Endothelial cell of umbilical vein (primary cell): ENCODE measurements at regions of chr18 and their contacts with region 1.

Region 1: GRCh38 chr18:51197661-51198424 is at the start of gene MEX3C:
- DNase-seq: peak; percentile 99
- H3K4me3 ChIP-seq: peak within 1 kb of the TSS; percentile 65 to 95 (median 95)
- H3K27ac ChIP-seq: peak within 1 kb of the TSS; percentile 91
- H3K4me1 ChIP-seq: peaks cover 20% of the 10 kb centered on the region
- H3K27me3 ChIP-seq: no peaks in the 10 kb centered on the region
- CTCF ChIP-seq: peak in 1 of 2 donors; percentile 22
- POLR2A ChIP-seq: peak; percentile 72
- total RNA-seq, gene MEX3C: 45.2 and 45.7 TPM in 2 replicates

Region 2: GRCh38 chr18:50281295-50281971 is 916.4 kb before region 1 on chr18 and contains the start of gene MBD1:
- CTCF ChIA-PET with region 1: no interaction called
- POLR2A ChIA-PET with region 1: no interaction called
- dilution Hi-C with region 1: no loop called
- intact Hi-C with region 1: loop called (anchors 5 kb)
- DNase-seq: peak; percentile 99
- H3K4me3 ChIP-seq: peak within 1 kb of the TSS; percentile 79 to 89 (median 84)
- H3K27ac ChIP-seq: peak within 1 kb of the TSS; percentile 60
- H3K4me1 ChIP-seq: peaks cover 25% of the 10 kb centered on the region
- H3K27me3 ChIP-seq: no peaks in the 10 kb centered on the region
- CTCF ChIP-seq: peak in 1 of 2 donors; percentile 26
- POLR2A ChIP-seq: peak; percentile 89
- total RNA-seq, gene MBD1: 77.5 and 78.6 TPM in 2 replicates

Region 3: DNA sequence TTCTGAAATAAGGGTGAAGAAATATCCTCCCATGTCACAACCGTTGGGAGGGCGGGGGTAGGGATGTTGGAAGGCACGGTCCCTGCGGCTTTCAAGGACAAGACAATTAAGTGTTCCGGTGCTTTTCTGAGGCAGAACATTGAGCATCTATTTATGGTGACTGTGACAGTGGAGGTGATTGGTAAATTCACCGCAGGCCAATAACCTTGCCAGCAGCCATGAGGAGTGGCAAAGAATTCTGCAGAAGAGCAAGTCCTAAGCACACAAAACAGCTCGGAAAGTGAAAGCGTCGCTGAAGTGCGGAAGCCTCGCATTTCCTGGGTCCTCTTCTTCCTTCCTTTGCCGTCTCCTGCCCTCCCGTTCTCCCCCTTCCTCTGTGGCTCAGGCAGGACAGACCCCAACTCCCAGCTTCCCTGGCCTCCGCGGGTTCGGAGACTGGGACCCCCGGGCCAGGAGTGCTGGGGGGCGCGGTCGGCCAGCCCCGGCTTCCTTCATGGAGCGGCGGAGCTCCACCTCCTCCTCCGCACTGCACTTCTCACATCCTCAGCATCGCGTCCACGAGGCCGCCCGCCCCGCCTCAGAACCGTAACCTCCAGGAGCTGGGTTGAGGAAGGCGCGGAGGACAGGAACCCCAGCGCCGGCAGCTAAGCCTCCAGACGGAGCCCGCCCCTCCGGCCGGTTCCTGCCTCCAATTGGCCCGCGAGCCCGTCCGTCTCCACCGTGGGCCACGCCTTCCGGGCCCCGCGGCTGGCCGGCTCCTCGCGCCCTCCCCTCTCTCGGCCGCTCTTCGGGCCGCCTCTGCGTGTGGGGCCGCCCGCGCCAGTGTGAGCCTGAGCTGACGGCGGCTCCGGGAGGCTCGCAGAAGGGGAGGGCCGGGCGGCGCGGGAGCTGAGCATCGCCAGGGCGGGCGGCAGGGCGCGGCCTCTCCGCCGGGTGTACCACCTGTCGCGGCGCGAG is 319.2 kb before region 1 on chr18 and contains the start of gene ME2:
- CTCF ChIA-PET with region 1: no interaction called
- POLR2A ChIA-PET with region 1: interaction called, 4 read pairs
- dilution Hi-C with region 1: no loop called
- intact Hi-C with region 1: loop called (anchors 1 kb)
- DNase-seq: peak; percentile 93
- H3K4me3 ChIP-seq: peak within 1 kb of the TSS; percentile 50 to 94 (median 69)
- H3K27ac ChIP-seq: peak within 1 kb of the TSS; percentile 42
- H3K4me1 ChIP-seq: peaks cover 9% of the 10 kb centered on the region
- H3K27me3 ChIP-seq: no peaks in the 10 kb centered on the region
- CTCF ChIP-seq: no peak
- POLR2A ChIP-seq: peak; percentile 73
- total RNA-seq, gene ME2: 39.6 and 42.4 TPM in 2 replicates

Region 4: DNA sequence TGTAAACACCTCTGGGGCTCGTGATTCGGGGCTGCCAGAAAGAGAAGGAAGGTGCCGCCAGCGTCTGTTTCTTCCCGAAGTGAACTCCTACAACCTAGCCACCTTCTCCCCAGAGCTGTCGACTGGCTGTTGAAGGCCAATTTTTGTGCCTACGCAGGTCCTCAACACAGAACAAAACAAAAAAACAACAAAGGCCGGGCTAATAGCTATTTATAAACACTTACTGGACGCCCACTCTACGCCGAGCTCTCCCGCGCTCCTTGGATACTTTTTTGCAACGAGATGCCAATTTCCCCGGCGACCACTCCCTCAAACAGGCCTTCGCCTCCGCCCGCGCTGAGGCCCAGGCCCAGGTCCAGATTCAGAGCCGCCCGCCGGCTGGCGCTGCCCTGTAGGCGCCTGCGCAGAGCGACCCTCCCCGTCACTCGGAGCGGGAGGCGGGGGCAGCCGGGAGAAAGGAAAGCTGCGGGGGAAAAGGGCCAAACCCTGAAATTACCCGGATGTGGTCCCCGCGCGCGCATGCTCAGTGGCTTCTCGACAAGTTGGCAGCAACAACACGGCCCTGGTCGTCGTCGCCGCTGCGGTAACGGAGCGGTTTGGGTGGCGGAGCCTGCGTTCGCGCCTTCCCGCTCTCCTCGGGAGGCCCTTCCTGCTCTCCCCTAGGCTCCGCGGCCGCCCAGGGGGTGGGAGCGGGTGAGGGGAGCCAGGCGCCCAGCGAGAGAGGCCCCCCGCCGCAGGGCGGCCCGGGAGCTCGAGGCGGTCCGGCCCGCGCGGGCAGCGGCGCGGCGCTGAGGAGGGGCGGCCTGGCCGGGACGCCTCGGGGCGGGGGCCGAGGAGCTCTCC is 167.9 kb before region 1 on chr18 and contains the start of gene SMAD4:
- CTCF ChIA-PET with region 1: no interaction called
- POLR2A ChIA-PET with region 1: interaction called, 7 read pairs
- dilution Hi-C with region 1: no loop called
- intact Hi-C with region 1: loop called (anchors 5 kb)
- DNase-seq: peak; percentile 97
- H3K4me3 ChIP-seq: peak within 1 kb of the TSS; percentile 64 to 87 (median 87)
- H3K27ac ChIP-seq: peak within 1 kb of the TSS; percentile 93
- H3K4me1 ChIP-seq: peaks cover 21% of the 10 kb centered on the region
- H3K27me3 ChIP-seq: no peaks in the 10 kb centered on the region
- CTCF ChIP-seq: no peak
- POLR2A ChIP-seq: peak; percentile 85
- total RNA-seq, gene SMAD4: 79.3 and 82.8 TPM in 2 replicates

Region 5: GRCh38 chr18:51211552-51211951 is 13.7 kb after region 1 on chr18:
- CTCF ChIA-PET with region 1: no interaction called
- POLR2A ChIA-PET with region 1: no interaction called
- dilution Hi-C with region 1: no loop called
- intact Hi-C with region 1: loop called (anchors 1 kb)
- DNase-seq: peak; percentile 83
- H3K4me3 ChIP-seq: no peak overlapping the region
- H3K27ac ChIP-seq: peak overlapping the region; percentile 39
- H3K4me1 ChIP-seq: peaks cover 10% of the 10 kb centered on the region
- H3K27me3 ChIP-seq: no peaks in the 10 kb centered on the region
- CTCF ChIP-seq: no peak
- POLR2A ChIP-seq: no peak

Region 6: DNA sequence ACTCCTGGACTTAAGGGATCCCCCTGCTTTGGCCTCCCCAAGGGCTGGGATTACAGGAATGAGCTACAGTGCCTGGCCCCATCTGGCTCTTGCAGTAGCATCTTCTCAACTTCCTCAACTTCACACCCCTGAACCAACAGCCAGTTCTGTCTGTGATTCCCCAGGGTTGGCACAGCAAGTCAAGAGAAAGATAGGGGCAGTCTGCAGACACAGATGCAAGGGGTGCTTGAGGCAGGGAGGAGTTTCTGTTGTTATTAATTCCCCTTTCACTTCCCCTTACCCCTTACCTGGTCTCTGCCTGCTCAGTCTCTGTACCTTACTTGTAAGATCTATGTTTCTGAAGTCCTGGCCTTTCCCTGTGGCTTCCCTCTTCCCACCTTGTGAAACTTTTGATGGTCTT is 53.8 kb after region 1 on chr18:
- CTCF ChIA-PET with region 1: no interaction called
- POLR2A ChIA-PET with region 1: no interaction called
- dilution Hi-C with region 1: no loop called
- intact Hi-C with region 1: no loop called
- DNase-seq: no peak
- H3K4me3 ChIP-seq: no peak overlapping the region
- H3K27ac ChIP-seq: no peak overlapping the region
- H3K4me1 ChIP-seq: no peaks in the 10 kb centered on the region
- H3K27me3 ChIP-seq: no peaks in the 10 kb centered on the region
- CTCF ChIP-seq: no peak
- POLR2A ChIP-seq: no peak

Region 7: DNA sequence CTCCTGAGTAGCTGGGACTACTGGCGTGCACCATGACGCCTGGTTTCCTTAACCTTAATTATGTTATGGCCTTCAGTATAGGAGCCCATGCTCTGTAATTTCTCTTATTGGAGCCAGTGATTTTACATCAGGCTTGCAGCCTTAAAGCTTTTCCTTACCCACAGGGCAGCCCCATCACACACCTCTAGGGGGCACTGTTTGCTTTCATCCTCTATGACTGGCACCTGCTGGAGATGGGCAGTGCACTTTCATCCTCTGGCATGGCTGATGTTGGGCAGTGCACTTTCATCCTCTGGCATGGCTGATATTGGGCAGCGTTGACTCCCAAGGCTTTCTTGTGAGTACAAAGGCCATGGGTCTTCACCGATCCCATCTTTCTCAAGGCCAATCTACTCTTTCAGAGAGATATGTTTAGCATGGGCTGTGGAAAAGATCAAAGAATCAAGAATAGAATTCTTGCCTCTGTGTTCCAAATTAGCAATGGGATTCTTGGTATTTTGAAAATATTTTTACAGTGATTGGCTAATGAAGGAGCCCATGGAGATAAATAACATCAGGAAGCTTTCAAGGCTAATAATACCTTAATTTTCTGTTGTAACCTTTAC is 80.3 kb after region 1 on chr18:
- CTCF ChIA-PET with region 1: no interaction called
- POLR2A ChIA-PET with region 1: no interaction called
- dilution Hi-C with region 1: no loop called
- intact Hi-C with region 1: no loop called
- DNase-seq: no peak
- H3K4me3 ChIP-seq: no peak overlapping the region
- H3K27ac ChIP-seq: no peak overlapping the region
- H3K4me1 ChIP-seq: no peaks in the 10 kb centered on the region
- H3K27me3 ChIP-seq: no peaks in the 10 kb centered on the region
- CTCF ChIP-seq: peak; percentile 44 to 46
- POLR2A ChIP-seq: no peak